Activated naive CD4-positive, alpha-beta T cell treated with anti-CD3 and anti-CD28 coated beads, Interleukin-2, amount 10 ng/mL, durations not matched to agents 7 days and 5 days (primary cell): ENCODE measurements at regions of chr18 and their contacts with region 1.

Region 1: DNA sequence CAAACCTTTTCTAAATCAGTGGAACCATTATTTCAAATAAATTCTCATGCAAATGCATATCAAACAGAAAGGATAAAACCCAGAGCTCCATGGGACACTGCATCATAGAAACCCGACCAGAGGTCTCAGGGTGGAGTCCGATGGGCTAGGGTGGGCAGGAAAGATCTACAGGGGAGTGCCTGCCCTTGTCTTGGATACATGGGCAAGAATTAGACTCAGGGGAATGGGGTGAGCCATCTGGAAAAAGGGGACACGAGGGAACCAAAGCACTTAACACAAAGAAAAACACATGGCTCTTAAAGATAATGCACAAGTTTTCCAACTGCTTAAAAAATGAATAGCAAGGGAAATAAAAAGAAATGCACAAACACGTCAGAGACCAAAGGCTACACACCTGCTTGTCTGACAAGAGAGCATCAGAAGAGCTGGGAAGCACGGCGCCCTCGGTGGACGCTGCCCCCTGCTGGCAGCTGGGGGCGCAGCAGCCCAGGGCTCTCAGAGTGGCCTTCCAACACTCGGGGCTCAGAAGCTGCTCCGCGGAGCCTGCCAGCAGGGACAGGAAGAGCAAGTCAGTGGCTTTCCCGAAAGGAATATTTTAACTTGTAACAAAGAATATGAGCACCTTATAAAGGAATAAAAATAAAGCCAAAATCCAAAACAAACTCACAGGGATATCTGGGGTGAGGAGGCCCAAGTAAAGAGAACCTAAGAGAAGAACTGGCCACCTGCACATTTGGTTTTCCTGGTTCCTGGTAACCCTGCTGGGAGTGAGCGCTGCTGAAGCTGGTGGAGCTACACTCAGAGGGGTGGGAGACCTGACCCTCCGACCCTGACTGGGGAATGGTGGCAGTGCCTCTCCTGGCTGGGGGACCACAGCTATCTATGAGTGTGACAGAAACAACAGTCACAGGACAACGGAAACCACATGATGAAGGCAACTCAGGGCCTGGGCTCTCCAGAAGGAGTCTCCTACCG is 54.5 kb downstream of the SIGLEC15 start:
- DNase-seq: peak; percentile 74
- H3K4me3 Mint-ChIP-seq: no peak overlapping the region
- H3K27ac Mint-ChIP-seq: no peak overlapping the region
- H3K4me1 Mint-ChIP-seq: peaks cover 12% of the 10 kb centered on the region
- H3K27me3 Mint-ChIP-seq: no peaks in the 10 kb centered on the region

Region 2: DNA sequence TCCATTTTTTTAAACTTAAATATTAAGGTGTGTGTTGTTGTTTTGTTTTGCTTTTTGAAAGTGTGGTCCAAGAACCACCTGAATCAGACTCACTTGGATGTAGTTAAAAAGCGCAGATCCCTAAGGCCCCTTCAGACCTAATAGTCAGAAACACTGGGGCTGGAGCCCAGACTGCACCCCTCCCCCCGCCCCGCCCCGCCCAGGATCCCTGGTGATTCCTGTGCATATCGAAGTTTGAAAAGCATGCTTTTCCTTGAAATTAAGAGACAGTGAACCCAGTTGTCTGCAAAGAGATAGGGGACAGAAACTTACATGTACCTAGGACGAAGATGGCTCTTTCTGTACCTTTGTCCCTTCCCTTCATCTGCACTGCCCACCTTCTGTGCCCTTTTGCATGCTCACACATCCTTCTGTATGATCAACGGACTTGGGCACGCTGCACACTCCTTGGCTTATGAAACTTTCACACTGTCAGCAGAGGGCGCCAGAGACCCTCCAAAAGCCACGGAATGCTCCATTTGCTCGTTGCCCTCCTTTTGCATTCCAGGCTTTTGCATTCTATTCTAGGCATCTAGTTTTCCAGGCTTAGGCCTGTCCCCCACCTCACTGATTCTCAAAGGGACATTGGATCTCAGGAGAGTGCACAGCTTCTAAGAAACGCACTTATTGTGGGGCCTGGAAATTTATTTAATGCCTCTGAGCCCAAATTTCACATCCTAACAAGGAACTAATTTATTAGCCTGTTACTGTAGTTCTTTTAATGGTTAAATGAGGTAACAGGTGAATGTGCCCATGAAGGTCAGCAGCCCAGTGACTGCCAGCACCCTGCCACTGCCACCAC is 188.8 kb before region 1 on chr18:
- CTCF ChIA-PET with region 1: interaction called, 40 read pairs
- DNase-seq: peak; percentile 83
- H3K4me3 Mint-ChIP-seq: no peak overlapping the region
- H3K27ac Mint-ChIP-seq: no peak overlapping the region
- H3K4me1 Mint-ChIP-seq: peaks cover 44% of the 10 kb centered on the region
- H3K27me3 Mint-ChIP-seq: peaks cover 37% of the 10 kb centered on the region

Region 3: DNA sequence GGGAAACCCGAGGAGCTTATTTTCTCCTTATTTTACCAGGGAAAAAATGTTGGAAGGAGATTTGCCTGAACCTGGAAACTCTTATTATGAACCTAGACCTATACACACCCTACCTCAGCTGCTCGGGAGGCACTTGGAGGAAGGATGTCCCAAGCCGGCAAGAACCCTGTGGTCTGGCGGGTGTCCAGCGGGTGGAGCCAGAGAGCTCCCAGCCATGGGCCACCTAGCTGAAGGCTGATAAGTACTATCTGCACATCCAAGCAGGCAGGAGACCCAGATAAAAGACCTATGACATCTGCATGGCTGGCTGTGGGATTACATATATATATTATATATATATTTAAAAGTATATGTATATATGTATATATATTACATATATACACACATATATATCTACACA is 157.1 kb before region 1 on chr18:
- CTCF ChIA-PET with region 1: interaction called, 82 read pairs
- DNase-seq: peak; percentile 81
- H3K4me3 Mint-ChIP-seq: no peak overlapping the region
- H3K27ac Mint-ChIP-seq: no peak overlapping the region
- H3K4me1 Mint-ChIP-seq: peaks cover 5% of the 10 kb centered on the region
- H3K27me3 Mint-ChIP-seq: peaks cover 19% of the 10 kb centered on the region

Region 4: GRCh38 chr18:45730832-45731575 is 149.0 kb before region 1 on chr18:
- CTCF ChIA-PET with region 1: interaction called, 82 read pairs
- DNase-seq: no peak
- H3K4me3 Mint-ChIP-seq: no peak overlapping the region
- H3K27ac Mint-ChIP-seq: no peak overlapping the region
- H3K4me1 Mint-ChIP-seq: no peaks in the 10 kb centered on the region
- H3K27me3 Mint-ChIP-seq: peaks cover 17% of the 10 kb centered on the region

Region 5: GRCh38 chr18:45890606-45891005 is 10.6 kb after region 1 on chr18:
- CTCF ChIA-PET with region 1: interaction called, 16 read pairs
- DNase-seq: no peak
- H3K4me3 Mint-ChIP-seq: no peak overlapping the region
- H3K27ac Mint-ChIP-seq: no peak overlapping the region
- H3K4me1 Mint-ChIP-seq: no peaks in the 10 kb centered on the region
- H3K27me3 Mint-ChIP-seq: no peaks in the 10 kb centered on the region

Region 6: GRCh38 chr18:46134920-46135675 is 255.1 kb after region 1 on chr18:
- CTCF ChIA-PET with region 1: no interaction called
- DNase-seq: no peak
- H3K4me3 Mint-ChIP-seq: no peak overlapping the region
- H3K27ac Mint-ChIP-seq: peak overlapping the region; percentile 67
- H3K4me1 Mint-ChIP-seq: peaks cover 10% of the 10 kb centered on the region
- H3K27me3 Mint-ChIP-seq: no peaks in the 10 kb centered on the region